Heart right ventricle (tissue), 16 donors: ENCODE measurements at regions of chr20 and their contacts with region 1.

Region 1: GRCh38 chr20:31485450-31486339 is 10.6 kb downstream of the REM1 start:
- DNase-seq: peak; percentile 76 to 91
- ATAC-seq: peak; percentile 84 to 95 (median 90)
- H3K4me3 ChIP-seq: peak overlapping the region in 8 of 10 donors; percentile 14 to 46 (median 38)
- H3K27ac ChIP-seq: peak overlapping the region; percentile 76 to 89 (median 86)
- H3K4me1 ChIP-seq: peaks cover 0 to 36% (median 10%) of the 10 kb centered on the region in 9 donors
- H3K27me3 ChIP-seq: peaks cover 0 to 21% (median 8%) of the 10 kb centered on the region in 7 donors
- CTCF ChIP-seq: no peak

Region 2: DNA sequence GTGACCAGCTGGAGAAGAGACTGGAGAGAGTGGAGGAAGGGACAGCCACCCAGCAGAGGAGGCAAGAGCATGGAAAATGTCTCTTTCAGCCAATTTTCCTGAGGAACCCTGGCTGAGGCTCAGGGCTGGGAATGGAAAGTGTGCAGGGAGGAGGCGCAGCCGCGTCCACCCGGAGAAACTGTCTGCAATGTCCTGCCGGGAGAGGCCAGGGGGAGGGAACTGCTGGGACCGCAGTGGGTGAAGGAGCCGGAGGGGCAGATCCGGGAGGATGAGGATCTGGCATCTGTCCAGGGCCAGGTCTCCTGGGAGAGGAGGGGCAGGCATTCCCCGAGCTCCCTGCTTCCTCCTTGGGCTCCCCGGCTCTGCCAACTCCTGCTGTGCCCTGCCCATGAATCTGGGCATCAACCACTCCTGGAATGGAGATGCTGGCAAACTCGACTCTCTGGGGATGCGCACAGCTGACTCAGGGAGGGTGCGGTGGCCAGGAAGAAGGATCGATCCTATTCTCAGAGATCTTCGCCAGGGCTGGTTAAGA is 11.1 kb after region 1 on chr20:
- intact Hi-C with region 1: loop called in 1 of 10 experiments (anchors 2 kb)
- DNase-seq: peak; percentile 84 to 89
- ATAC-seq: peak; percentile 87 to 94 (median 92)
- H3K4me3 ChIP-seq: peak overlapping the region in 2 of 10 donors; percentile 7 to 19
- H3K27ac ChIP-seq: peak overlapping the region; percentile 56 to 85 (median 75)
- H3K4me1 ChIP-seq: peaks cover 0 to 36% (median 19%) of the 10 kb centered on the region in 9 donors
- H3K27me3 ChIP-seq: peaks cover 0 to 14% (median 7%) of the 10 kb centered on the region in 7 donors
- CTCF ChIP-seq: no peak